Sciatic nerve (tissue), 2 donors: ENCODE measurements at regions of chr1 and their contacts with region 1.

Region 1: DNA sequence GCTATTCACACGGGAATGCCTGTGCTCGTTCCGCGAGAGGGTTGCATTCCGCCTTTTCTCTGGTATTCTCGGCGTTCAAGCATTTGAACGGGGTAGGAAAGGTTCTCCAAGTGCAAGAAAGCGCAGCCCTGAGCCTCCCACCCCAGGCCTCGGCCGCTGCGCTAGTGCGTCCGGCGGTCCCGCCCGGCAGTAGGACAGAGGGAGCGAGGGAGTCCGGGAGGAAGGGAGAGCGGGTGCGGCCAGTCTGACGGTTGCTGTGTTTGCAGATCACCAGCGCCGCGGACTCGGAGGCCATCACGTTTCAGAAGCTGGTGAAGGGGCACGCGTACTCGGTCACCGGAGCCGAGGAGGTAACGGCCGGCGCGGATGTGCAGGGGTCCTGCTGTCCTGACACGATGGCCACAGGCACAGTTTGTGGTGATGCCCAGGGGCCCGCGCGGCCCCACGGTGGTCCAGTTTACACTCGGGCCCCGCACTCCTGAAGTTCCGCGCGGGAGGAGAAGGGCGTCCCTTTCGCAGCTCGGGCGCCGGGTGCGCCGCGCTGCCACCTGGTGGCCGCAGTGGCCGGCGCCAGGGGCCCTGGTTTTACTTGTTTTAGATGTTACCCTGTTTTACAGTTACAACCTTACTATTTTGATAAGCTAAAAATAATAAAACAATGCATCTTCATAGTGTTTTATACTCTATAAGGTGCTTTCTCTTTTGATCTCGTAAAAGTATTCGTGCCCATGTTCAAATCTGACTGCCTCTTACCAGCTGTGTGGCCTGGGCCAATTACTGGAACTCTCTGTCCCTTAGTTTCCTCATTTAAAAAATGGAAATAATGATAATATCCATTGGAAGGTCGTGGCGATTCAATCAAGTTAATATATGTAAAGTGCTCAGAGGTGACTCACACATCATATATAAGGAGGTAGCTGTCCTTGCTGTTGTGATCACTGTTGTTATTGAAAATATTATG is 36.7 kb downstream of the CAPN2 start:
- DNase-seq: peak; percentile 79
- ATAC-seq: peak; percentile 88

Region 2: DNA sequence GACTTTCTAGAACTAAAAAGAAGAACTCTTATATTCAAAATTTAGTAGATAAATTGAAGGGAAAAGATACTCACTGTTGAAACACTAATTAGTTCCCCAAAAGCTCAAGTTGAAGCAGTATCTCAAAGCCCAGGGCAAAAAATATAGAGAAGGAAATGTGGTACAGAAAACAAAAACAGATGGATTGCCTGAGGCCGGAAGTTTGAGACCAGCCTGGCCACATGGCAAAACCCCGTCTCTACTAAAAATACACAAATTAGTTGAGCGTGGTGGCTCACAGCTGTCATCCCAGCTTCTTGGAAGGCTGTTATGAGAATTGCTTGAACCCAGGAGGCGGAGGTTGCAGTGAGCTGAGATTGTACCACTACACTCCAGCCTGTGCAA is 976.1 kb before region 1 on chr1:
- intact Hi-C with region 1: no loop called
- DNase-seq: no peak
- ATAC-seq: peak; percentile 75

Region 3: DNA sequence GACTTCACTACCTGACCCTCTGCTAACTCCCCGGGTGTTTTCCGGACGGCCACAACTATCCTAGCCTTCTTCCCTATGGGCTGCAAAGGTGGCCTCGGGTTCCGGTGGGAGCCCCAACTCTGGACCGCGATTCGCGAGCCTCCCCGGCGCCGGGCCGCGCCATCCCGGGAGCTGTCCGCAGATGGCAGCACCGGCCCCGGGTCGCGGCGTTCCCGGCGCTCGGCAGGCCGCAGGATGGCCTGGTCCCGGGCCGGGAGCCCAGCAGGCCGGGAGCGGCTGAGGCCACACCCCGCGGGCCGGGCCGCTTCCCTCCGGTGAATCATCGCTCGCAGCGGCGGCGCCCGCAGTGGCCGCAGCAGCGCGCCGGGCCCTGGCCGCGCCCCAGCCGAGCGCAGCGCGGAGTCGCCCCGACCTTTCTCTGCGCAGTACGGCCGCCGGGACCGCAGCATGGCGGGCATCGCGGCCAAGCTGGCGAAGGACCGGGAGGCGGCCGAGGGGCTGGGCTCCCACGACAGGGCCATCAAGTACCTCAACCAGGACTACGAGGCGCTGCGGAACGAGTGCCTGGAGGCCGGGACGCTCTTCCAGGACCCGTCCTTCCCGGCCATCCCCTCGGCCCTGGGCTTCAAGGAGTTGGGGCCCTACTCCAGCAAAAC is 36.7 kb before region 1 on chr1 and contains the start of gene CAPN2:
- intact Hi-C with region 1: loop called (anchors 2 kb)
- DNase-seq: peak; percentile 89
- ATAC-seq: peak; percentile 94
- total RNA-seq, gene CAPN2: 186 TPM

Region 4: DNA sequence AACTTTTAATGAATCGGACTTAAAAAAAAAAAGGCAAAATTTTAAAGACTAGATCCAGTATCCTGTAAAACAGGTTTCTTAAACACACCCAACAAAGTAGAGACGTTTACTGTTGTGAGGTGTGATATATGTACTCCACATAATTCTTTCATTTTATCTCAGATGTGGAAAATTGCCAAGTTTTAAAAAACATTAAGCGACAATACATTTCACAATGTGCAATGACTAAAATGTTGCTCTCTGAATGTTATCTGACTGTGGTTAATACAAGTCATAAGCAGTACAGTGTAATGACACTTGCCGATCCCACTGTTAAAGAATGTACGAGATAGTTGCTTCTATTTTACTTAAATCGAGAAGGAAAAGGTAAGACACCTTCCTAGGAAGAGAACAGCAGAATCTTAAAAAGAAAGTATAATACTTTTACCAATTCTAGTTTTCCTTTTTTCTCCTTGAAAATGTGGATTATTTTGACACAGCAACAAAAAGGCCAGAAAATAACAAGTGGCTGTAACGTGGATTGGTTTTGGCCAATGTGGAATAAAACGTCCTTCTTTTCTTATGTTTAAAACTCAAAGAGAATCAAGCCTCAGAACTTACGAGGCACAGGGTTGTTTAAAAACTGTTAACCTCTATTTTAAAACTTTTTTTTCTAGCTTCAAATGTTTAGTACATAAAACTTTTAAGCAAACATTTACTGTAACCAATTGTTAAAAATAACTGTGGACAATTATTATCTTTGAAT is 45.3 kb after region 1 on chr1:
- intact Hi-C with region 1: no loop called
- DNase-seq: no peak
- ATAC-seq: no peak

Region 5: GRCh38 chr1:224615861-224616755 is 867.1 kb after region 1 on chr1 and contains the start of gene CNIH3:
- intact Hi-C with region 1: no loop called
- DNase-seq: no peak
- ATAC-seq: peak; percentile 67
- total RNA-seq, gene CNIH3: 6.7 TPM